ENCODE measurements at regions of chr4 and their contacts with region 1.

Region 1: DNA sequence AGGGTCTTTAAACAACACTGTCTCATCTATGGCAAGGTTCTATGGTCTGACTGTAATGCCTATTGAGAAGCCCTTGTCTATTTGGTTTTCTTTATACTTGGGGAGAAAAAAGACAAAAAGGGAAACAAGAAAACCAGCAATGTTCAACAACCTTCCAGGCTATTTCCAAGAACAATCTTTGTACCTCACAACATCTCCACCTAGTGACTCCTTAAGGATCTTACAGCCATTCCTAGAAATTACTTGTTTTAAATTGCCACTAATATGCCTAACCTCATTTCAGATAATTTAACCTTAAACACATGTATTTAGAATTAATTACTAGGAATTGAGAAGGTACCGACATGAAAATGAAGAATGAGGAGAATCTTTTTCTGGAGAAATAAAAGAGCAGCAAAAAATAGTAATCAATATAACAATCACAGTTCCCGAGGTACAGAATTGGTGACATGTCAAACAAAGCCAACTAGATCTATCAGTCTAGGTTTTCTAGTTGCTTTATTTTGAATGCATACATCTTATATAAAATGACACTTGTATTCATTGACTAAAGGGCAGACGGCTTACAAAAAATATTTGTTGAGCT is 1.6 kb upstream of the RBM46 start:
- DNase-seq: peak; percentile 49
- ATAC-seq: no peak
- H3K4me3 ChIP-seq: no peak overlapping the region
- H3K27ac ChIP-seq: no peak overlapping the region
- H3K4me1 ChIP-seq: no peaks in the 10 kb centered on the region
- H3K27me3 ChIP-seq: peaks cover 6% of the 10 kb centered on the region
- CTCF ChIP-seq: peak; percentile 73

Region 2: GRCh38 chr4:154642373-154643009 is 137.0 kb before region 1 on chr4:
- CTCF ChIA-PET with region 1: no interaction called
- POLR2A ChIA-PET with region 1: no interaction called
- intact Hi-C with region 1: loop called (anchors 2 kb)
- DNase-seq: peak; percentile 51
- ATAC-seq: 0 out of 2 replicates have a peak, but pooled peaks have one; percentile 27
- H3K4me3 ChIP-seq: no peak overlapping the region
- H3K27ac ChIP-seq: no peak overlapping the region
- H3K4me1 ChIP-seq: peaks cover 21% of the 10 kb centered on the region
- H3K27me3 ChIP-seq: no peaks in the 10 kb centered on the region
- CTCF ChIP-seq: peak; percentile 35

Region 3: GRCh38 chr4:154686838-154687237 is 92.6 kb before region 1 on chr4:
- CTCF ChIA-PET with region 1: interaction called, 5 read pairs
- POLR2A ChIA-PET with region 1: no interaction called
- intact Hi-C with region 1: loop called (anchors 1 kb)
- DNase-seq: peak; percentile 35
- ATAC-seq: no peak
- H3K4me3 ChIP-seq: no peak overlapping the region
- H3K27ac ChIP-seq: no peak overlapping the region
- H3K4me1 ChIP-seq: no peaks in the 10 kb centered on the region
- H3K27me3 ChIP-seq: peaks cover 17% of the 10 kb centered on the region
- CTCF ChIP-seq: peak; percentile 43; the same call in 1 of the 2 replicates

Region 4: GRCh38 chr4:154743683-154744340 is 35.6 kb before region 1 on chr4 and contains the start of gene LRAT:
- CTCF ChIA-PET with region 1: no interaction called
- POLR2A ChIA-PET with region 1: no interaction called
- intact Hi-C with region 1: no loop called
- DNase-seq: peak; percentile 72
- ATAC-seq: peak; percentile 93
- H3K4me3 ChIP-seq: peak within 1 kb of the TSS; percentile 80
- H3K27ac ChIP-seq: no peak within 1 kb of the TSS
- H3K4me1 ChIP-seq: peaks cover 7% of the 10 kb centered on the region
- H3K27me3 ChIP-seq: no peaks in the 10 kb centered on the region
- CTCF ChIP-seq: peak; percentile 25; the same call in 1 of the 2 replicates
- total RNA-seq, gene LRAT: 0.55 and 0.92 TPM in 2 replicates